Naive thymus-derived CD8-positive, alpha-beta T cell (primary cell): ENCODE measurements at regions of chr2 and their contacts with region 1.

Region 1: DNA sequence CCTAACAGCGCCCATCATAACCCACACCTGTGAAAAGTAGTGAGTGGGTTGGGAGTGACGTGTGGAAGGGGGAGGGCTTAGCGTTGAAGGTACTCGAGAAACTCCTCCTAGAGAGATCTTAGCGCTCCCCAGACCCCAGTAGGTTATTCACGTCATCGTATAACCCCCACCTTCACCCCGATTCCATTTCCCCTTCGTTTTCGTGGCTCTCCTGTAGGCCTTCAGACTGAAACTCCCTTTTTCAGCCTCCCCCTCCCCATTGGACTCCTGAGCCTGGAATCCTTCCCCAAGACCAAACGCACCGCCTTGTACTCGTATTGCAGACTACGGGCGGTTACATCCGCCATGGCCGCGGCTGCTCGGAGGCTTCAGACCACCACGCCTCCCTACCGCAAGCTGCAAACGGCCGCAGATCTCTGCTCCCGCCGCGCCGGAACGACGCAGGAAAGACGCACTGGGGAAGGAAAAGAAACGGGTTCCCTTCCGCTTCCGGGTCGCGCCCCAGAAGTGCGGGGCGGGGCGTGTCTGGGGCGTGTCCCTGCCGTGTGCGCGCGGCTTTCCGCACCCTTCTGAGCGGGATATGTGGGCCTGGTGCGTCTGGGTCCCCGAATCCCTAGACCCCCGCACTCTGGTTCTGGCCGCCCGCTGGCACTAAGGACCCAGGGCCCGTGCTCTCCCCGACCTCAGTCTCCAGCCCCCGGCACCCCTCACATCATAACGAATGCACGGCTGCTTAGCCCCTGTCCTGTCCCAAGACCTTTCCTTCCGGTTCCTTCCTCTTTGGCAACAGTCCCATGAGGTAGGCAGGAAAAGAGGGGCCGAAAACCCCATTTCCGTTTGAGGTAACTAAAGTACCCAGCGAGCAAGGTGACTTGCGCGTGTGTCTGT is at the start of gene SNRNP200:
- DNase-seq: peak; percentile 85 to 94 (median 90)
- ATAC-seq: peak; percentile 87 to 89
- H3K4me3 Mint-ChIP-seq: peak within 1 kb of the TSS; percentile 94 to 100 (median 99)
- H3K27ac Mint-ChIP-seq: peak within 1 kb of the TSS; percentile 98 to 100 (median 100)
- H3K4me1 Mint-ChIP-seq: peaks cover 33 to 62% (median 57%) of the 10 kb centered on the region in 4 donors
- H3K27me3 Mint-ChIP-seq: no peaks in the 10 kb centered on the region
- polyA plus RNA-seq, gene SNRNP200: 61.8 to 111 (median 90.3) TPM

Region 2: DNA sequence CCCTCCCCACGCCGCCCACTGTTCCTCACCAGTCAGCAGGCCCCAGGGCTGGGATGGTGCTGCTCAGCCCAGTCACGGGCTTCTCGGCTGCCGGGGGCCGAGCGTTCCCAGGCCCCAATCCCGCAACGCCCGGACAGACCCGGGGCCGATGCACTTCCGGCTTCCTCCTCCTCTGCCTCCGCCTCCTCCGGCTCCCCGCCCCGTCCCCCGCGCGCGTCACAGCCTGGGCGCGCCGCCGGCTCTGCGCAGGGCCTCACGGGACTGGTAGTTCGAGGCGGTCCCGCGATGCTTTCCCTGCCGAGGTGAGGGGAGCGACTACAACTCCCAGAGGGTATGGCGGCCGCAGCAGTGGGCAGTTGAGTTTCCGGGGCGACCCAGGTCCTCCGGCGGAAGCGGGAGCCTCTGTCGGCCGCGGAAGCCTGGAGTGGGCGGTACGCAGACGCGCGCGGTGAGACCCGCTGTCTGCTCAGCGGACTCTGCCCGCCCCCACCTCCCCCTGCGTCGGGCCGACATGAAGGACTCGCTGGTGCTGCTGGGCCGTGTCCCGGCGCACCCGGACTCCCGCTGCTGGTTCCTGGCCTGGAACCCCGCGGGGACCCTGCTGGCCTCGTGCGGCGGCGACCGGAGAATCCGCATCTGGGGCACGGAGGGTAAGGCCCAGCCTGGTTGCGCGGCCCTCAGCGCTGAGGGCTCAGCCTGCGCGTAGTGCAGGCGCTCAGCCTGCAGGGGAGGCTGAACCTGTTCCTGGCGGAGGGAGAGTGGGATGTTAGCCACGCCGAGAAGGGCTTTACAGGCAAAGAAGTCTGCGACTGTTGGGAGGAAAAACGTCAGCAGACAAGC is 39.3 kb before region 1 on chr2 and contains the starts of genes CIAO1 and TMEM127:
- POLR2A ChIA-PET with region 1: interaction called, 10 read pairs
- DNase-seq: peak; percentile 93 to 98 (median 97)
- ATAC-seq: peak; percentile 92
- H3K4me3 Mint-ChIP-seq: peak within 1 kb of the TSS; percentile 89 to 99 (median 96)
- H3K27ac Mint-ChIP-seq: peak within 1 kb of the TSS; percentile 87 to 98 (median 94)
- H3K4me1 Mint-ChIP-seq: peaks cover 27 to 59% (median 51%) of the 10 kb centered on the region in 4 donors
- H3K27me3 Mint-ChIP-seq: no peaks in the 10 kb centered on the region
- polyA plus RNA-seq, gene CIAO1: 85.5 to 106 (median 95.2) TPM
- polyA plus RNA-seq, gene TMEM127: 22.1 to 35.7 (median 22.3) TPM

Region 3: GRCh38 chr2:96291751-96292150 is 13.6 kb before region 1 on chr2:
- POLR2A ChIA-PET with region 1: interaction called, 13 read pairs
- DNase-seq: no peak
- ATAC-seq: no peak
- H3K4me3 Mint-ChIP-seq: no peak overlapping the region
- H3K27ac Mint-ChIP-seq: peak overlapping the region in 1 of 10 donors; percentile 59
- H3K4me1 Mint-ChIP-seq: peaks cover 0 to 3% (median 1%) of the 10 kb centered on the region in 4 donors
- H3K27me3 Mint-ChIP-seq: no peaks in the 10 kb centered on the region

Region 4: DNA sequence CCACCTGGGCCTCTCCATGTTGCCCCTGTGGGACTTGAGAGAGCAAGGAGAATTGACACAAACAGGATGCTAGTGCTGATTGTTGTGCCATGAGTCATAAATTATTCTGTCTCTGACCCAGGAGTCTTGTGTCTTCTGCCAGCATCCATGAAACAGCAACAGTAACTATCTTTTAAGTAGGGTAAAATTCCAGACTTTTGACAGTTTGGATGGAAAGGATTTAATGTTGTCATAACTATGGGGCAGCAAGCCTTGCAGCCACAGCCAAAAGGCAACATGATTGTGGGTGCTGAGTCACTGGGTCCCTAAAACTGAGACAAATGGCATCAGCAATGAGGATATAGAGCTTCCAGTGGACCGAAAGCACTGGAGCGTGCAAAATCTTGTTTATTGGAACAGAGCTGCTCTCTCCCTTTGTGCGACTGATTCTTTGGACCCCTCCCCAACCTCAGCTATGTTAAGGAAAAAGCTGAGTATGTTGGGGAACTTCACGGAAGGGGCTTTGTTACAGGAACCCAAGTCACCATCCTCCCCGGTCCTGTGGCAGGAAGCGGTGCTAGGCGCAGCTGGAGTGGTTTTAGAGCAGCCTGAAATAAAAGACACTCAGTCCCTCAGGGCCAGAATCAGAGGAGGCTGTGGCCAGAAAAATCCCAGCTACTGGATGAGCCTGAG is 10.2 kb after region 1 on chr2:
- POLR2A ChIA-PET with region 1: interaction called, 59 read pairs
- DNase-seq: peak in 3 of 10 donors; percentile 7 to 25 (median 24)
- ATAC-seq: peak; percentile 71 to 73
- H3K4me3 Mint-ChIP-seq: peak overlapping the region; percentile 33 to 66 (median 55)
- H3K27ac Mint-ChIP-seq: peak overlapping the region in 9 of 10 donors; percentile 49 to 92 (median 75)
- H3K4me1 Mint-ChIP-seq: peaks cover 12 to 43% (median 35%) of the 10 kb centered on the region in 4 donors
- H3K27me3 Mint-ChIP-seq: no peaks in the 10 kb centered on the region

Region 5: DNA sequence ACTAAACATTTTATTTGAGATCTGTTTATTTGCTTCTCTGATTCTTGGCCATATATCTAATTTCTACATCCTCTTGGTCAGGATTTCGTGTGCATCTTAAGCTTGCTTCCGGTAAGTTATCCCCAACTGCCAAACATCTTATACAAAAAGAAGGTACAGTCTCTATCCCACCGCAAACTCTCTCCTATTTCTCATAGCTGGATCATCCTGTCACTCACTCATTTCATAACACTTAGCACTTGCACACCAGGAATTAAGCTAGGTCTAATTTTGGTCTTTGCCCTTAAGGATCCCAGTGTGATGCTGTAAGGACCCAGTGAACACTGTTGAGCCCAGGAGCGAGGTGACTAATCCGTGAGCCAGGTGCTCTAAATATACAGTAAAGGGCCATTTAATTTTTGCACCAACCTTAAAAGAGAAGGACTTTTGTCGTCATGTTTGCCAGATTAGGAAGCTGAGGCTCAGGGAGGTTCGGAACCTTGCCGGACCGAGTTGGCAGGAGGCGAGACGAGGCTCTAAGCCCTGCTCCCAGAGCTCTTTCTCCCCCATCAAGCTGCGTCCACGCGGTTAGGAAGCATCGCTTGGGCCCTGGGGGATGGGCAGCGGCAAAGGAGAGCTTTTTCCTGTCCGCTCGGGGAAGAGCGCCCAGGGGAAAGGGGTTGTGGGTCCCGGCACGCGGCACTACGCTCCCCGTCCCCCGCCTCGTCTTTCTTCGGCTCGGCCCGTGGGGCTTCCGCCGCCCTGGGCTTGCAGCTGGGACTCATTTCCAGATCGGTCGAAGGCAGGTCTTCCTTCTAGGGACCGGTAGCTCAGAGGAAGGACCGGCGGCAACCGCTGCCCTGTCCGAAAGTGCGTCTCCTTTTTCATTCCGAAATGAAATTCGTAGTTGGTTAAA is 15.6 kb after region 1 on chr2:
- POLR2A ChIA-PET with region 1: interaction called, 59 read pairs
- DNase-seq: peak in 1 of 10 donors; percentile 9
- ATAC-seq: peak; percentile 26 to 35
- H3K4me3 Mint-ChIP-seq: peak overlapping the region; percentile 75 to 94 (median 90)
- H3K27ac Mint-ChIP-seq: peak overlapping the region; percentile 50 to 87 (median 74)
- H3K4me1 Mint-ChIP-seq: peaks cover 25 to 66% (median 60%) of the 10 kb centered on the region in 4 donors
- H3K27me3 Mint-ChIP-seq: no peaks in the 10 kb centered on the region

Region 6: DNA sequence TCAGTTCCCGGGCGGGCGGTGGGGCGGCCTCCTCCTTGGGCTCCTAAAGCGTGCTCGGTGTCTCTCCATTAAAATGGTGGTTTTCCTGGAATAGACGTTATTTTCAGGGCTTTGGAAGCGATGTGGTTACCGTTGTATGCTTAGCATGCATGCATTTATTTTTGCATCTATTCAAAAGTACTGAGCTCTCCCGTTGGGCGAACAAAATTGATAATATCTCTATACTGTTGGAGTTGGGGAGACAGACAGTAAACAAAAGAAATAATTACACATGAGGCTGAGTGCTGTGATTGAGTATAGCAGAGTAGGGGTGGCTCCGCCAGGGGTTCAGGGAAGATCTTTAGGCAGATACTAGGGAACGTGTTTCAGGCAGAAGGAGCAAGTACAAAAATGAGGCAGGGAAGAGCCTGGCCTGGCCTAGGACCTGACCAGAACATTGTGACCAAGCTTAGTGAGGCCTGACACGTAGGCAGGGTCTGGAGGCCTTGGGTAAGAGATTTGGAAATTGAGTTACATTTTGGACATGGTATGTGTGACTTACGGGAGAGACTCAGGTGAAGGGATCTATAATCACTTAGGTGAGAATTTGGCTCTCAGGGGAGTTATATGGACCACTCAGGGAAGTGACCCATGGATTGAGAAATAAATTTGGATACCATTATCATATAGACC is 30.9 kb after region 1 on chr2:
- POLR2A ChIA-PET with region 1: interaction called, 57 read pairs
- DNase-seq: no peak
- ATAC-seq: no peak
- H3K4me3 Mint-ChIP-seq: peak overlapping the region; percentile 72 to 92 (median 85)
- H3K27ac Mint-ChIP-seq: peak overlapping the region in 9 of 10 donors; percentile 7 to 79 (median 62)
- H3K4me1 Mint-ChIP-seq: peaks cover 9 to 33% (median 22%) of the 10 kb centered on the region in 4 donors
- H3K27me3 Mint-ChIP-seq: no peaks in the 10 kb centered on the region

Region 7: DNA sequence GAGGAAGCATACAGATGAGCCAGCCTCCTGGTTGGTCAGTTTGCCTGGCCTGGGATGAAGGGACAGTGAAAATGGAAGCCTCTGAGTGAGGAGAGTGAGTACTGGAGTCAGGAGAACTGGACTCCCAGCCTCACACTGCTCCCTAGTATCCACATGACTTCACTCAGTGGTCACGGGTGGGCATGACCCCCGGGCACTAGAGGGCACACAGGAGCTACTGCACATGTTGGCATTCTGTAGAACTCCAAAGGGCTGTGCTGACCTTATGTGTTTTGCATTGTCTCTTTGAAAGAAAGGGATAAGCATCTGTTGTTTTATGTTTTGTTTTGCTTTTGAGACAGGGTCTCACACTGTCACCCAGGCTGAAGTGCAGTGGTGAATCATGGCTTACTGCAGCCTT is 54.0 kb after region 1 on chr2:
- POLR2A ChIA-PET with region 1: no interaction called
- DNase-seq: peak; percentile 33 to 82 (median 56)
- ATAC-seq: peak; percentile 92 to 99
- H3K4me3 Mint-ChIP-seq: no peak overlapping the region
- H3K27ac Mint-ChIP-seq: peak overlapping the region in 2 of 10 donors; percentile 49 to 82
- H3K4me1 Mint-ChIP-seq: peaks cover 0 to 6% (median 0%) of the 10 kb centered on the region in 4 donors
- H3K27me3 Mint-ChIP-seq: no peaks in the 10 kb centered on the region